Activated T-helper 1 cell treated with anti-CD3 and anti-CD28 coated beads, Interleukin-12 subunit alpha, Interleukin-12 subunit beta, Interleukin-2, Interleukin-4 antibody, amounts not matched to agents 30 ng/mL and 10 ng/mL and 1 ng/mL, durations not matched to agents 14 hours and 24 hours and 36 hours (primary cell): ENCODE measurements at regions of chr19 and their contacts with region 1.

Region 1: GRCh38 chr19:17703824-17704463 is 15.3 kb upstream of the MAP1S start:
- DNase-seq: peak; percentile 50
- H3K4me3 Mint-ChIP-seq: no peak overlapping the region
- H3K27ac Mint-ChIP-seq: no peak overlapping the region
- H3K4me1 Mint-ChIP-seq: no peaks in the 10 kb centered on the region
- H3K27me3 Mint-ChIP-seq: peaks cover 2% of the 10 kb centered on the region

Region 2: DNA sequence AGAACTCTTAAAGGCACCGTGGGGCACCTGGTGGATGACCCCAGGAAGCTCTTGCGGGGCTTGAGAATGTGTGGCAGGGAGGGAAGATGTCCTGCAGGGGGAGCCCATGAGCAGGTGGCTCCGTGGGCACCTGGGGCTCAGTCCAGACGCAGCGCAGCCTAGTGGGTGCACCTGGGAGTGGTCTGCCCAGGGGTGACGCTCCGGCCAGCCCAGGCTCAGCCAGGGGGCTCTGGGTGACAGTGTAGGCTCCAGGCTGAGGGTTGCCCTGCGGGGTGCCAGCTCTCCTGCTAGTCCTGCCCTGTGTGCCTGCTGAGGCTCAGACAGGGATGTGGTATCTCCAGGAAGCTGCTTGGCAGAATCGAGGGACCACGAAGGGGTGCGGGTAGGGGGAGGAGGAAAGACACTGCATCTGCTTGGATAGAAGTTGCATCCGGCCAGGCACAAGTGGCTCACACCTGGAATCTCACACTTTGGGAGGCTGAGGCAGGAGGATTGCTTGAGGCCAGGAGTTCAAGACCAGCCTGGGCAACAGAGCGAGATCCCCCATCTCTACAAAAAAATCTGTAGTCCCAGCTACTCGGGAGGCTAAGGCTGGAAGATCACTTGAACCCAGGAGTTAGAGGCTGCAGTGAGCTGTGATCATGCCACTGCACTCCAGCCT is 207.5 kb before region 1 on chr19:
- intact Hi-C with region 1: no loop called
- DNase-seq: peak; percentile 74
- H3K4me3 Mint-ChIP-seq: no peak overlapping the region
- H3K27ac Mint-ChIP-seq: no peak overlapping the region
- H3K4me1 Mint-ChIP-seq: peaks cover 13% of the 10 kb centered on the region
- H3K27me3 Mint-ChIP-seq: no peaks in the 10 kb centered on the region

Region 3: DNA sequence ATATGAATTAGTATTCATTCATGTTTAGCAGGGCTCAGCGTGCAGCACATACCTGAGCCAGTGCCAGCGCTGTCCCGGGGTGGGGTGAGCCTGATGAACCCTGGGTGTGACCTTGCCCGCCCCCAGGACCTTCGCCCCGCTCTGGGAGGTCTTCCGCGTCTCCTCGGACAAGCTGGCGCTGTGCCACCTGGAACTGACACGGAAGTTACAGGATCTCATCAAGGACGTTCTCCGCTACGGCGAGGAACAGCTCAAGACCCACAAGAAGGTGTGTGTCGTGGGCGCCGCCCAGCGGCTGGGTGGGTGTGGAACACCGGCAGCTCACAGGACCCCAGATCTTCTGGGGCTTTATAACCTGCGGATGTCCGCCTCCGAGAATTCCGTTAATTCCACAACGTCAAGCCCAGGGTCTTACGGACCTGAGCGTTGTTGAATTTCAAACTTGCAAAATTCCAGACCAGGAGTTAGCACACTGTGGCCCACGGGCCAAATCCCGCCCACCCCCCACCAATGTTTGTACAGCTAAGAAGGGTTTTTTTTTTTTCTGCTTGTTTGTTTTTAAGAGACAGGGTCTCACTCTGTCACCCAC is 62.7 kb after region 1 on chr19:
- intact Hi-C with region 1: loop called (anchors 1 kb)
- DNase-seq: peak; percentile 35
- H3K4me3 Mint-ChIP-seq: no peak overlapping the region
- H3K27ac Mint-ChIP-seq: no peak overlapping the region
- H3K4me1 Mint-ChIP-seq: no peaks in the 10 kb centered on the region
- H3K27me3 Mint-ChIP-seq: no peaks in the 10 kb centered on the region

Region 4: DNA sequence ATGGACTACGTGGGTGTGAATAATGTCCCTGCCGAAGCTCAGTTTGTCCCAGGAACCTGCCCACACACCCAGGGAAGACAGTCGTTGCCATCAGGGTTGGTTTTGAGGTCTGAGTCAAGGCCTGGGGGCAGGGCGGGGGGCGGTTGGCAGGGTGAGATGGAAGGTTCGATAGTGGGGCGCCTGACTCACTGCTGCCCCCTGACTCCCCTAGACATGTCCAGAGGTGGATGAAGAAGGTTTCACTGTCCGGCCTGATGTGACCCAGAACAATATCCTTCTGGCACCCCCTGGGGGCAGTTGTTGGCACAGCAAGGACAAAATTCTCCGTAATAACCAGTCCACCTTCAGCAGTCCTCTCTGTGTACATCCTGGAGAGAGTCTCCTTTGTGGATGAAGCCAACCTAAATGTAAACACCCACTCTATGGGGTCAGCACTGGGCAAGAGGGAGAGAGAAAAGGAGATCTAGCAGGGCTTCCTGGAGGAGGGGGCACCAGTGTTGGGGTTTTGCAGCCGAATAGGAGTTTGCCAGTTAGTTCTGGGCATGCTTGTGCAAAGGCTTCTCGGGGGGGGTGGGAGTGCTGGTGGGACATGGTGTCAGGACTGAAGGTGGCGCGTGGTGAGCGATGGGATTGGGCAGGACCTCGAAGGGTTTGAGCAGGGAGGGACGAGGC is 71.4 kb after region 1 on chr19:
- intact Hi-C with region 1: loop called (anchors 2 kb)
- DNase-seq: no peak
- H3K4me3 Mint-ChIP-seq: no peak overlapping the region
- H3K27ac Mint-ChIP-seq: peak overlapping the region; percentile 5
- H3K4me1 Mint-ChIP-seq: peaks cover 6% of the 10 kb centered on the region
- H3K27me3 Mint-ChIP-seq: no peaks in the 10 kb centered on the region

Region 5: GRCh38 chr19:17784201-17785008 is 80.5 kb after region 1 on chr19:
- intact Hi-C with region 1: loop called (anchors 1 kb)
- DNase-seq: peak; percentile 56
- H3K4me3 Mint-ChIP-seq: no peak overlapping the region
- H3K27ac Mint-ChIP-seq: peak overlapping the region; percentile 63
- H3K4me1 Mint-ChIP-seq: peaks cover 17% of the 10 kb centered on the region
- H3K27me3 Mint-ChIP-seq: no peaks in the 10 kb centered on the region